ENCODE measurements at regions of chr3 and their contacts with region 1.

Region 1: DNA sequence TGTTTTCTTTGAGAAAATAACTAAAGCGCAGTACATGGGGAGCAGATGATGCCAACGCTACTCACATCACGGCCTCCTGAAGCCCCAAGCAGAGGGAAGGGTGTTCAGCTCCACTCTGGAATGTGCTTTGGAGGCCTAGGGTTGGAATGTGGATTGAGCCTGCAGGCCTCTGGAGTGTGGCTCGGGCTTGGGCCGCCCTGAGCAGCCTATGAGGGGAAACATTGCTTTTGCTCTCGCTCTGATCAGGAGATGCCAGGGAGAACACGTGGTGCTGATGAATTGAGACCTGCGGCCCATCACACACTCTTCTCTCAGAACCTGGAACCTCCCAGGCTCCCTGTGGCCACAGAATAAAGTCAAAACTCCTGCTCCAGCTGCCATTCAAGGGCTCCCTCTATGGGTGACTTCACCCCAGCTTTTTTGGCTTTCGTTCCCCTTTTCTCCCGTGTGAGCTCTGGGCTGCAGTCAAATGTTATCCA is 23.3 kb downstream of the CCDC13 start:
- DNase-seq: peak in 1 of 5 donors; percentile 31
- ATAC-seq: peak; percentile 15 to 47 (median 31)
- H3K4me3 ChIP-seq: no peak overlapping the region
- H3K27ac ChIP-seq: peak overlapping the region in 3 of 12 donors; percentile 24 to 94 (median 87)
- H3K4me1 ChIP-seq: peaks cover 0 to 47% (median 13%) of the 10 kb centered on the region in 12 donors
- H3K27me3 ChIP-seq: no peaks in the 10 kb centered on the region
- CTCF ChIP-seq: peak; percentile 9 to 61 (median 38)
- POLR2A ChIP-seq: no peak

Region 2: GRCh38 chr3:42229942-42230688 is 519.7 kb before region 1 on chr3:
- intact Hi-C with region 1: loop called in 1 of 10 experiments (anchors 10 kb)
- DNase-seq: no peak
- ATAC-seq: peak in 2 of 4 donors; percentile 12 to 42
- H3K4me3 ChIP-seq: peak overlapping the region in 1 of 12 donors; percentile 29
- H3K27ac ChIP-seq: no peak overlapping the region
- H3K4me1 ChIP-seq: peaks cover 0 to 8% (median 0%) of the 10 kb centered on the region in 12 donors
- H3K27me3 ChIP-seq: peaks cover 0 to 4% (median 0%) of the 10 kb centered on the region in 9 donors
- CTCF ChIP-seq: peak in 10 of 12 donors; percentile 28 to 66 (median 54)
- POLR2A ChIP-seq: no peak

Region 3: GRCh38 chr3:42581709-42582473 is 167.9 kb before region 1 on chr3 and contains the start of gene SEC22C:
- intact Hi-C with region 1: loop called (anchors 5 to 10 kb)
- DNase-seq: peak; percentile 95 to 98 (median 96)
- ATAC-seq: peak; percentile 98 to 99 (median 99)
- H3K4me3 ChIP-seq: peak within 1 kb of the TSS; percentile 79 to 96 (median 88)
- H3K27ac ChIP-seq: peak within 1 kb of the TSS; percentile 80 to 95 (median 89)
- H3K4me1 ChIP-seq: peaks cover 0 to 25% (median 14%) of the 10 kb centered on the region in 12 donors
- H3K27me3 ChIP-seq: no peaks in the 10 kb centered on the region
- CTCF ChIP-seq: peak in 9 of 12 donors; percentile 20 to 55 (median 37)
- POLR2A ChIP-seq: peak; percentile 84 to 96
- total RNA-seq, gene SEC22C: 19.9 to 40.5 (median 28.9) TPM

Region 4: GRCh38 chr3:42600111-42600988 is 149.4 kb before region 1 on chr3 and contains the start of gene NKTR:
- intact Hi-C with region 1: loop called in 1 of 10 experiments (anchors 10 kb)
- DNase-seq: peak; percentile 96 to 98 (median 97)
- ATAC-seq: peak; percentile 94 to 96 (median 95)
- H3K4me3 ChIP-seq: peak within 1 kb of the TSS; percentile 74 to 97 (median 88)
- H3K27ac ChIP-seq: peak within 1 kb of the TSS; percentile 95 to 100 (median 98)
- H3K4me1 ChIP-seq: peaks cover 0 to 36% (median 25%) of the 10 kb centered on the region in 12 donors
- H3K27me3 ChIP-seq: no peaks in the 10 kb centered on the region
- CTCF ChIP-seq: peak in 4 of 12 donors; percentile 12 to 35 (median 14)
- POLR2A ChIP-seq: peak in 1 of 2 donors; percentile 90
- total RNA-seq, gene NKTR: 14.6 to 40.6 (median 20.9) TPM

Region 5: DNA sequence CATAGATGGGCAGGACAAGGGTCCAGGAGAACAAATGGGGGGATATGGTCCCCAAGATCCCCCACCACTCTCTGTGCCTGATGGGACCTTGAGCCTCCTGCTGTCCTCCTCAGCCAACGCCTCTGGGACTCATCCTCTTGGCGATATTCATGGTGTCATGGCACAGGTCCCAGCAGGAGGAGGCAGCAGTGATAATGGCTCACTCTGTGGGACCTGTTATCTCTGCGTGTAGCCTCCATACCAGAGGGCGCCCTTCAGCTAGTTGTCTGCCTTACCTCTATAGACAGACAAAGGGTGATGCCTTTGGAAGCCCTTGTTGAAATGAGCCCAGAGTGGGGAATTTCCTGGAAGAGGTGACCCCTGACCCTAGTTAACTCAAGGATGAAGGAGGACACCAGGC is 88.9 kb before region 1 on chr3:
- intact Hi-C with region 1: loop called in 7 of 10 experiments (anchors 2 to 5 kb)
- DNase-seq: peak in 3 of 5 donors; percentile 43 to 64 (median 52)
- ATAC-seq: peak in 3 of 4 donors; percentile 32 to 58 (median 36)
- H3K4me3 ChIP-seq: no peak overlapping the region
- H3K27ac ChIP-seq: peak overlapping the region in 9 of 12 donors; percentile 19 to 98 (median 61)
- H3K4me1 ChIP-seq: peaks cover 0 to 63% (median 24%) of the 10 kb centered on the region in 12 donors
- H3K27me3 ChIP-seq: no peaks in the 10 kb centered on the region
- CTCF ChIP-seq: peak in 3 of 12 donors; percentile 18 to 43 (median 32)
- POLR2A ChIP-seq: no peak

Region 6: DNA sequence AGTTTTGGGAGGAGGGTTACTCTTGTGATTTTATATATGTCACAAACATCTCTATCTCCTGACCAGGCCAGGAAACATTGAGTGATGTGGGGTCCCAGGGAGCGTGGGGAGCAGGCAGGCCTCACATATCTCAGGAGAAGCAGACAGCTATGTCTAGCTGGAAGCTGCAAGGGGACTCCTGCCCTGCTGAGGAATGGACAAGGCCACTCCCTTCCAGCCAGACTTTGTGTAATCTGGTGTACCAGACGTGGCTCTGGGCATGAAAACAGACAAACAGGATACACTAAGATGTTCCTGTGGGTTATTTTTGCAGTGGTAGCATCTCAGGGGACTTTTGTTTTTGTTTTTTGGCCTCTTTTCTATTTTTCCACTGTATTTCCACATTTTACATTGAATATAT is 102.6 kb after region 1 on chr3:
- intact Hi-C with region 1: no loop called
- DNase-seq: no peak
- ATAC-seq: peak; percentile 44 to 71 (median 66)
- H3K4me3 ChIP-seq: peak overlapping the region in 1 of 12 donors; percentile 6
- H3K27ac ChIP-seq: peak overlapping the region in 3 of 12 donors; percentile 1 to 61 (median 38)
- H3K4me1 ChIP-seq: peaks cover 0 to 31% (median 2%) of the 10 kb centered on the region in 12 donors
- H3K27me3 ChIP-seq: no peaks in the 10 kb centered on the region
- CTCF ChIP-seq: no peak
- POLR2A ChIP-seq: no peak

Region 7: GRCh38 chr3:42975456-42975855 is 225.7 kb after region 1 on chr3:
- intact Hi-C with region 1: no loop called
- DNase-seq: no peak
- ATAC-seq: no peak
- H3K4me3 ChIP-seq: no peak overlapping the region
- H3K27ac ChIP-seq: no peak overlapping the region
- H3K4me1 ChIP-seq: peaks cover 0 to 19% (median 8%) of the 10 kb centered on the region in 12 donors
- H3K27me3 ChIP-seq: peaks cover 3 to 28% (median 10%) of the 10 kb centered on the region in 9 donors
- CTCF ChIP-seq: no peak
- POLR2A ChIP-seq: no peak

Measured in heart left ventricle (tissue), 16 donors.